ENCODE measurements at regions of chr1 and their contacts with region 1.

Region 1: DNA sequence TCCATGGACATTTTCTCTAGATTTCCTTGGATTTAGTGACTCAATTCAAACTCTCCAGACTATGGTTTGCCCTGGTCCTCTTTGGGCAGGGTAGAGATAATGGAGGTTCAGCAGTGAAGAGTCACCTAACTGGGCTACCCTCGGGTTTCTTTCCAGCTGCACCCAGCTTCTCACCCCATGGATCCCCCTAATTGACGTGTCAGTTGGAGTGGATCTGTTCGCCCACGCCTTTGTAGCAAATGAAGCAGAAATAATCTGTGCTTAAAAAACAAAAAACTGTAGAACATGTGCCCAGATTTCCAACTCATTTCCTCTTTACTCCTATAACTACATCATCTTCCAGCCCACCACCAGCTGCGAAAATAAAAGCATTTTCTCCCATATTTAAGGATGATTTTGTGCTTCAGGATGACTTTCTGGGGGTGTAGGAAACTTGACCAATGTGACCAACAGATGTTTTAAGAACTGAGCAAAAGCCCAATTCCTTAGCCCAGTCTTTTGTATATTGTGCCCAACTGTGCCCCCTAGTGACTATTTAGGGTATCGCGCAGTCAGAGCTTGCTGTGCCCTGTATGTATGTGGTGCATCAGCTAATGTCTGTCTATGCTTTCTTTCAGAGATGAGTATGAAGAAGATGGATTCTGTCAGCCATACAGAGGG is 66.5 kb upstream of the UBE2U start:
- DNase-seq: peak; percentile 63
- H3K4me3 ChIP-seq: no peak overlapping the region
- H3K27ac ChIP-seq: no peak overlapping the region
- H3K4me1 ChIP-seq: no peaks in the 10 kb centered on the region
- CTCF ChIP-seq: peak; percentile 95

Region 2: GRCh38 chr1:63615768-63616420 is 521.0 kb before region 1 on chr1:
- CTCF ChIA-PET with region 1: no interaction called
- POLR2A ChIA-PET with region 1: interaction called, 3 read pairs
- intact Hi-C with region 1: loop called (anchors 2 kb)
- DNase-seq: peak; percentile 68
- H3K4me3 ChIP-seq: no peak overlapping the region
- H3K27ac ChIP-seq: no peak overlapping the region
- H3K4me1 ChIP-seq: peaks cover 4% of the 10 kb centered on the region
- CTCF ChIP-seq: peak; percentile 88

Region 3: GRCh38 chr1:63691701-63692425 is 445.0 kb before region 1 on chr1:
- CTCF ChIA-PET with region 1: interaction called, 6 read pairs
- POLR2A ChIA-PET with region 1: interaction called, 3 read pairs
- intact Hi-C with region 1: loop called (anchors 1 kb)
- DNase-seq: peak; percentile 68
- H3K4me3 ChIP-seq: no peak overlapping the region
- H3K27ac ChIP-seq: no peak overlapping the region
- H3K4me1 ChIP-seq: no peaks in the 10 kb centered on the region
- CTCF ChIP-seq: peak; percentile 89

Region 4: DNA sequence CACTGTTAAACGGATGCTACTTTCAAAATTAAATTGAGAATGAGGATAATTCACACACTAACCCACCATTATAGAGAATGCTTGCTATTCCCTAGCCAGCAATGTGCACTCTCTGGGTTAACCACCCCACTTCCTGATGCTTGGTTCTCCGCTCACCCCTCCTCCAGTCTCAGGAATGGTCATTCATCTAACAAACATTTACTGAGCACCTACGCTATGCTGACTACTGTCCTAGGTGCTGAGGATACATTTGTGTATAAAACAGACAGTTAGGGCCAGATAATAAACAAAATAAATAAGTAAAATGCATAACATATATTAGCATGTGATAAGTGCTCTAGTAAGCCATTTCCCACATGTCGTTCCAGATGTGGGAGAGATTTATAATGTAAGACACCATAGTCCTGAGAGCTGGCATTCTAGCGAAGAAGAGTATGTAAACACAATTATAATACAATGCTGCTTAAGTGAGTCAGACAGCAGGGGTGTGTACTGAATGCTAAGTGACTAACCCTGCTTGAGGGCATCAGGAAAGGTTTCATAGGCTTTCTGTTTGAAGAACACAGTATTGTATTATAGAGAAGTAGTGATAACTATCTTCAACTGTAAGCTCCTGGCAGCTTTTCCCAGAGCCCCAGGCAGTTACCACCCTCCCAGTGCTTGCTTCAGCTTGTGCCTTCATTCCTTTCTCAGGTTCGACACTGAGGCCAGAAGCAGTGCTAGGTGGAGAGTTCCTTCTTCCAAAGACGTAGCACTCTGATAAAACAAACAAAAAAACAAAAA is 206.4 kb after region 1 on chr1:
- CTCF ChIA-PET with region 1: no interaction called
- POLR2A ChIA-PET with region 1: no interaction called
- intact Hi-C with region 1: no loop called
- DNase-seq: no peak
- H3K4me3 ChIP-seq: no peak overlapping the region
- H3K27ac ChIP-seq: no peak overlapping the region
- H3K4me1 ChIP-seq: no peaks in the 10 kb centered on the region
- CTCF ChIP-seq: no peak